Esophagus muscularis mucosa (tissue), 4 donors: ENCODE measurements at regions of chr3 and their contacts with region 1.

Region 1: GRCh38 chr3:194315088-194315964 is 35.8 kb downstream of the CPN2 start:
- DNase-seq: peak; percentile 96
- H3K4me3 ChIP-seq: peak overlapping the region; percentile 50 to 62 (median 52)
- H3K27ac ChIP-seq: peak overlapping the region; percentile 39 to 76 (median 61)
- H3K4me1 ChIP-seq: peaks cover 30 to 63% (median 58%) of the 10 kb centered on the region in 4 donors
- H3K27me3 ChIP-seq: peaks cover 0 to 10% (median 0%) of the 10 kb centered on the region in 4 donors
- CTCF ChIP-seq: peak; percentile 91 to 97 (median 96)
- EP300 ChIP-seq: no peak
- POLR2A ChIP-seq: no peak

Region 2: DNA sequence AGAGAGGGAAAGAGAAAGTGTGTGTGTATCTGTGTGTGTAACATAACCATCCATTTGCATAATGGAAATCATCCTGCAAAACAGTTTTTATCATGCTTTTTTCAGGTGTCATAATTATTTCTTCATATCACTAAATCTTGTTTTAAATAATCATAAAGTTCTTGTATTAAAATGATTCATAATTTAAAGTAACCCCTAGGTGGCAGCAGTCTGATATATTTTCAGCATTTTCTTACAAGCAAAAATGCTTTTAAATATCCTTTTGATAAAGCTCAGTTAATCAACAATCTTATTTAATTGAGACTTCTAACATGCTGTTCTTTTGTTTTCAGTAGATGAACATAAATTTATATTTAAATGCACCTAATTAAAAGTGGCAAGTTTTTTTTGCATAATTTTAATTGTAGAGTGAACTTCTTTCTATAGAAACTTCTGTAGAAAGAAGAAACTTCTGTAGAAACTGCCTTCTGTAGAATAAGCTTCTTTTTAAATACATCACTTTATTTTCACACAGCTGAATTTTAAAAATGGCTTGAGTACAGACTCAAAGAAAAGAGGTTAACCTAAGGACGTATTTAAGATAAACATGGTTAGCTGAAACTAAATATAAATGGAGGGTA is 649.8 kb before region 1 on chr3:
- intact Hi-C with region 1: loop called (anchors 10 kb)
- DNase-seq: no peak
- H3K4me3 ChIP-seq: no peak overlapping the region
- H3K27ac ChIP-seq: no peak overlapping the region
- H3K4me1 ChIP-seq: no peaks in the 10 kb centered on the region
- H3K27me3 ChIP-seq: no peaks in the 10 kb centered on the region
- CTCF ChIP-seq: peak; percentile 24 to 45 (median 31)
- EP300 ChIP-seq: no peak
- POLR2A ChIP-seq: no peak

Region 3: DNA sequence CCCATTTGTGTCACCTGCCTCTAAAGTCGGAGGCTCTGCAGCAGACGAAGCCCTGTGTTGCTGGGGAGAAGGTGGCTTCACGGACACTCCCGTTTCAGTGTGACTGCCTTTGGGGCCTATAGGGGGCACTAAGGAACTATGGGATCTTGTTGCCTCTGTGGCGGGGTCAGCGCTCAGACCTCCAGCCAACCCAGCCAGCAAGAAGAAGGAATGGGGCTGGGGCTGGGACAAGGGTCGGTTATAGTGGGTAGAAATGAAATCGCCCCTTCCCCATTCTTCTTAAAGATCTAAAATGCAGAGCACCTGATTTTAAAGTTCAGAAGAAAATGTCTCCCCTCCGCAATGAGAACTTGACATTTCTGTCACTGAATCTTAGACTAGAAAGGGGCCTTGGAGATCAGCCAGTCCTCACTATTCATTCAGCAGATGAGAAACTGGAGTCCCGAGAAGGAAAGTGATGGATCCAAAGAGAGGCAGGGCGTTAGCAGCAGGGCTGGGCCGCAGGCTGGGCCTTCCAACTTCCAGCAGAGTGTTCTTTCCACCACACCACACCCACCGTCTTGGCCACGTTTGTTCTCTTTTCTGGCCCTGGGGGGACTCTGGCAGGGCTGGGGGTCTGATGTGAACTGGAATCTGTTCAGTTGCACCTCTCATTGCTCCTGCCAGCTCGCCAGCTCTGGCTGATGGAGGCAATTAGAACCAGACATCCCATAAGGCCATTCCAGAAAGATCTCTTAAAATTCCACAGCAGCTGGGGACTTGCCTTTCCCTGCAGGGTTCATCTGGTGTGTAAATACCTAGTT is 526.9 kb before region 1 on chr3:
- intact Hi-C with region 1: loop called (anchors 2 kb)
- DNase-seq: no peak
- H3K4me3 ChIP-seq: no peak overlapping the region
- H3K27ac ChIP-seq: peak overlapping the region in 2 of 4 donors; percentile 32 to 59
- H3K4me1 ChIP-seq: peaks cover 13 to 24% (median 21%) of the 10 kb centered on the region in 4 donors
- H3K27me3 ChIP-seq: peaks cover 0 to 4% (median 0%) of the 10 kb centered on the region in 4 donors
- CTCF ChIP-seq: peak; percentile 77 to 87 (median 79)
- EP300 ChIP-seq: no peak
- POLR2A ChIP-seq: no peak

Region 4: GRCh38 chr3:194070634-194071409 is 244.5 kb before region 1 on chr3:
- intact Hi-C with region 1: loop called (anchors 10 kb)
- DNase-seq: no peak
- H3K4me3 ChIP-seq: peak overlapping the region; percentile 60 to 74 (median 62)
- H3K27ac ChIP-seq: peak overlapping the region; percentile 78 to 88 (median 84)
- H3K4me1 ChIP-seq: peaks cover 18 to 23% (median 22%) of the 10 kb centered on the region in 4 donors
- H3K27me3 ChIP-seq: no peaks in the 10 kb centered on the region
- CTCF ChIP-seq: no peak
- EP300 ChIP-seq: no peak
- POLR2A ChIP-seq: no peak

Region 5: GRCh38 chr3:194204042-194204987 is 111.0 kb before region 1 on chr3:
- intact Hi-C with region 1: loop called (anchors 5 kb)
- DNase-seq: no peak
- H3K4me3 ChIP-seq: peak overlapping the region; percentile 41 to 43 (median 42)
- H3K27ac ChIP-seq: no peak overlapping the region
- H3K4me1 ChIP-seq: peaks cover 0 to 39% (median 25%) of the 10 kb centered on the region in 4 donors
- H3K27me3 ChIP-seq: peaks cover 0 to 21% (median 9%) of the 10 kb centered on the region in 4 donors
- CTCF ChIP-seq: no peak
- EP300 ChIP-seq: no peak
- POLR2A ChIP-seq: no peak

Region 6: DNA sequence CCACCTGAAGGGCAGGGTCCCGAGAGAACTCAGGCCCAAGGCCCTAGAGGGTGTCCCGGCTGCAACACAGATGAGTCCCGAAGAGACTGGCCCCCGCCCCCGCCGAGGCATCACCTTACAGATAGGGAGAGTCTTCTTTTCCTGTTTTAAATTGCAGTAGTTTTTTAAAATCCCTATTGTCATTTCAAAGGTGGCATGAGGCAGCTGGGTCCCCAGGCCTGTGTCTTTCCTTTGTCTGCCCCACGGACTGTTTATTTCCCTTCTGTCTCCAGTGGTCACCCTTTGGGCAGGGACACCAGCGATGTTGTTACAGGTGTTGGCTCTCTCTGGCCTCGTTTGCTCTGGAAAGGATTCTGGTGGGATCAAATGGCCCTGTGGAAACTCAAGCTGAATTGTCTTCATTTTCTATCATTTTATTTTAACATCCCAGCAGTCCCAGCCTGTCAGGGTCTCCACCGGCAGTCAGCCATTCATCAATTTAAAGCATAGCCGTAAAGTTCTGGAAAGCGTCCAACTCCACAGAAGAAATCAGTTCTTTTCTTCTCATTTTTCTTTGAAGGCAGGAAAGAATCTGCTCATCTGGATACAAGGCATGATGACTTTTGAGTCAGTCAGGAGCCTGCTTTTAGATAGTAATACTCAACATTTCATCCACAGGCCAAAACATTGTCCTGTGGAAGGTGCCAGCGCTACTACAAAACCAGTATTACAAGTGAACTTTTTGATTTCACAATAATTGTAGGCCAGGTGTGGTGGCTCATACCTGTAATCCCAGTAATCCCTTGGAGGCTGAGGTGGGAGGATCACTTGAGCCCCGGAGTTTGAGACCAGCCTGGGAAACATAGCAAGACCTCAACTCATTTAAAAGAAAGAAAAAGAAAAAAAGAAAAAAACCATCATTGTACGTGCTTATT is 83.1 kb before region 1 on chr3:
- intact Hi-C with region 1: no loop called
- DNase-seq: no peak
- H3K4me3 ChIP-seq: no peak overlapping the region
- H3K27ac ChIP-seq: no peak overlapping the region
- H3K4me1 ChIP-seq: no peaks in the 10 kb centered on the region
- H3K27me3 ChIP-seq: no peaks in the 10 kb centered on the region
- CTCF ChIP-seq: no peak
- EP300 ChIP-seq: no peak
- POLR2A ChIP-seq: no peak

Region 7: GRCh38 chr3:194671900-194672808 is 356.8 kb after region 1 on chr3 and contains the start of gene LSG1:
- intact Hi-C with region 1: no loop called
- DNase-seq: peak; percentile 98
- H3K4me3 ChIP-seq: peak within 1 kb of the TSS; percentile 64 to 81 (median 74)
- H3K27ac ChIP-seq: peak within 1 kb of the TSS; percentile 87 to 90 (median 88)
- H3K4me1 ChIP-seq: peaks cover 19 to 32% (median 23%) of the 10 kb centered on the region in 4 donors
- H3K27me3 ChIP-seq: peaks cover 0 to 17% (median 0%) of the 10 kb centered on the region in 4 donors
- CTCF ChIP-seq: peak in 1 of 3 experiments; percentile 34
- EP300 ChIP-seq: no peak
- POLR2A ChIP-seq: no peak
- total RNA-seq, gene LSG1: 19.9 to 35.0 (median 32.6) TPM